CD14-positive monocyte (primary cell): ENCODE measurements at regions of chr17 and their contacts with region 1.

Region 1: DNA sequence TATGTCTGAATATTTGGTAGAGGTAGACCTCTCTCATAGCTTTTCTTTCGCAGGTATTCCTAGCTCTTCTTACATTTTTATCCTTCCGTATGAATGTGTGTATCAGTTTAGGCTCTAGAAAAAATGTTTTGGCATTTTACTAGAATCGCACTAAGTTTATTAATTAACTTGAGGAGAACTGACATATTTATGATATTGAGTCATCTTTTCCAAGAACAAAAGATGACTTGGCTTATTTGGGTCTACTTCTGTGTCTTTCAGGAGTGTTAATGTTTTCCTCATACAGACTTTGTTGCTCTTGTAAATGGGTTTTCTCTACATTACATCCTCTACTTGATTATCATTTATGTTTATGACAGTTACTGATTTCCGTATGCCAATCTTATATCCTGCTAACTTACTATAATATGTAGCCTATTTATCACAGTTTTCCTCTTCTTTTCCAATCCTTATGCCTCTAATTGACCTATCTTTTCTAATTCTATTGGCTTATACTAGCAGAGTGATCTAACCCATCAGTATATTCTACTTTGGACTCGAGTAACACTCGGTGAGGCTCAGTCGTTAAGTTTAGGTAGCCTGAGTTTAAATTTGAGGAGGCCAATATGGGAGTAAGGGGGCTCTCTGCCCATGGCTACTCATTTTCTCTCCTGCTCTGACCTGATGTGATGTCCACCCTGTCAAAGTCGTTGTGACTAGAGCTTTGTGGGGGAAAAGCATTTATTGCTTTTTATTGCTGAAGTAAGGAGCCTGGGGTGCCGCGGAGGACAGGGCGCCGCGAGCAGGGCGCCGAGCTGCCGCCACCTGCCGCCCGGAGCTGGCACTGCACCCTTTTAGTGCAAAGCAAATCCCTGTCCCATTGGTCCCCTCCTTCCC is 20.0 kb downstream of the ST6GALNAC1 start:
- DNase-seq: peak; percentile 64 to 75 (median 67)
- H3K4me3 ChIP-seq: no peak overlapping the region
- H3K4me3 Mint-ChIP-seq: no peak overlapping the region
- H3K27ac ChIP-seq: no peak overlapping the region
- H3K27ac Mint-ChIP-seq: peak overlapping the region in 1 of 7 donors; percentile 48
- H3K4me1 ChIP-seq: no peaks in the 10 kb centered on the region
- H3K4me1 Mint-ChIP-seq: peaks cover 8% of the 10 kb centered on the region
- H3K27me3 ChIP-seq: no peaks in the 10 kb centered on the region
- H3K27me3 Mint-ChIP-seq: peaks cover 1 to 9% (median 7%) of the 10 kb centered on the region in 3 donors
- CTCF ChIP-seq: peak; percentile 96

Region 2: DNA sequence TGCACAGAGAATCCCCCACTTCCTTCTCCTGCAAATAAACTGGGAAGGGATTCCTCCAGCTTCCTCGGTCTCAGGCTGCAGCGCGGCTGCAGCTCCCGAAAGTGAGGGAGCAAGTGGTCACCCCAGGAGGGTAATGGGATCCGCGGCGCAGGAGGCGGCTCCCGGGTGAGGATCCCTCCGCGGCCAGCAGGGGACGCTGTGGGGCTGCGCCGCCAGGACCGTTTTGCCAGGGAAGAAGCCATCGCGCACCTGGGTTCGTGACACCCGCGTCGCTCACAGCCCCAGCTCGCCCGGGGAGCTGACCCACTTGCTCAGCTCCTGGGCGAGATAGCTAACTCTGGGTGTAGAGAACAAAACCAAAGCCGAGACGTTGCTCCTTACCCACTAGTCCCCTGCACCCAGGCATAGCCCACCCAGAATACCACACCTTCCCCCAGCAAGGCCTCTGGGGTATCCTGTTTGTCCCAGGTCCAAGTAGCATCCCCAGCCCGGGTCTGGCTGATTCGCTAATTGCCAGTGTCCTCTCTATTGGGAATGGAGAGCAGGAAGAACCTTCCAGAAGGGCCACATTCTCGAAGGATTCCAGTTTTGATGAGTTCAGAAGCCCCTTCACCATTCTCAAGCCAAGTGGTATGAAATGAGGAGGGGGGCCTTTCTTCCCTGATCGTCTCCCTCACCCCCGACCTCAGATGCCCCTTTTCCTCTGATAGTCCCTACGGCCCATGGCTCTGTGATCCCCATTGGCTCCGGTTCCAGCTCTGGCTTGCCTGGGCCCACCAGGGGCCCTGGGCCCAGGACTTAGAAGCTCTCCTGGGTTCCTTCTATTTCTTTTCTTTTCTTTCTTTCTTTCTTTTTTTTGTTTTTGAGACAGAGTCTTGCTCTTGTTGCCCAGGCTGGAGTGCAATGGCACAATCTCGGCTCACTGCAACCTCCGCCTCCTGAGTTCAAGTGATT is 100.1 kb before region 1 on chr17:
- intact Hi-C with region 1: loop called (anchors 1 to 2 kb)
- DNase-seq: peak; percentile 66 to 79 (median 67)
- H3K4me3 ChIP-seq: no peak overlapping the region
- H3K4me3 Mint-ChIP-seq: peak overlapping the region in 1 of 2 donors; percentile 71
- H3K27ac ChIP-seq: no peak overlapping the region
- H3K27ac Mint-ChIP-seq: peak overlapping the region in 2 of 7 donors; percentile 8 to 61
- H3K4me1 ChIP-seq: peaks cover 4 to 13% of the 10 kb centered on the region in 2 donors
- H3K4me1 Mint-ChIP-seq: peaks cover 11% of the 10 kb centered on the region
- H3K27me3 ChIP-seq: peaks cover 0 to 19% of the 10 kb centered on the region in 2 donors
- H3K27me3 Mint-ChIP-seq: peaks cover 21 to 38% (median 33%) of the 10 kb centered on the region in 3 donors
- CTCF ChIP-seq: peak; percentile 100

Region 3: GRCh38 chr17:76567634-76568432 is 55.7 kb before region 1 on chr17:
- intact Hi-C with region 1: loop called in 1 of 2 experiments (anchors 5 kb)
- DNase-seq: peak; percentile 48 to 61 (median 51)
- H3K4me3 ChIP-seq: no peak overlapping the region
- H3K4me3 Mint-ChIP-seq: peak overlapping the region in 1 of 2 donors; percentile 55
- H3K27ac ChIP-seq: no peak overlapping the region
- H3K27ac Mint-ChIP-seq: peak overlapping the region in 6 of 7 donors; percentile 25 to 86 (median 62)
- H3K4me1 ChIP-seq: peaks cover 21 to 33% of the 10 kb centered on the region in 2 donors
- H3K4me1 Mint-ChIP-seq: peaks cover 34% of the 10 kb centered on the region
- H3K27me3 ChIP-seq: peaks cover 0 to 7% of the 10 kb centered on the region in 2 donors
- H3K27me3 Mint-ChIP-seq: peaks cover 10 to 24% (median 20%) of the 10 kb centered on the region in 3 donors
- CTCF ChIP-seq: no peak